ENCODE measurements at regions of chr6 and their contacts with region 1.

Region 1: GRCh38 chr6:157597446-157598312 is 216.7 kb downstream of the ZDHHC14 start:
- DNase-seq: peak; percentile 24
- H3K4me3 ChIP-seq: no peak overlapping the region
- H3K27ac ChIP-seq: no peak overlapping the region
- H3K4me1 ChIP-seq: no peaks in the 10 kb centered on the region
- H3K27me3 ChIP-seq: no peaks in the 10 kb centered on the region
- CTCF ChIP-seq: peak; percentile 29 to 66

Region 2: GRCh38 chr6:157339432-157339831 is 258.2 kb before region 1 on chr6:
- CTCF ChIA-PET with region 1: no interaction called
- dilution Hi-C with region 1: no loop called
- in situ Hi-C with region 1: no loop called
- intact Hi-C with region 1: loop called (anchors 1 kb)
- DNase-seq: no peak
- H3K4me3 ChIP-seq: no peak overlapping the region
- H3K27ac ChIP-seq: no peak overlapping the region
- H3K4me1 ChIP-seq: peaks cover 4% of the 10 kb centered on the region
- H3K27me3 ChIP-seq: no peaks in the 10 kb centered on the region
- CTCF ChIP-seq: peak in 1 of 2 donors; percentile 20

Region 3: GRCh38 chr6:157679605-157680580 is 82.2 kb after region 1 on chr6:
- CTCF ChIA-PET with region 1: no interaction called
- dilution Hi-C with region 1: no loop called
- in situ Hi-C with region 1: no loop called
- intact Hi-C with region 1: no loop called
- DNase-seq: no peak
- H3K4me3 ChIP-seq: no peak overlapping the region
- H3K27ac ChIP-seq: no peak overlapping the region
- H3K4me1 ChIP-seq: no peaks in the 10 kb centered on the region
- H3K27me3 ChIP-seq: peaks cover 2% of the 10 kb centered on the region
- CTCF ChIP-seq: no peak

Measured in mammary epithelial cell (primary cell).